Ovary (tissue), 10 donors: ENCODE measurements at regions of chr14 and their contacts with region 1.

Region 1: GRCh38 chr14:76918751-76919543 is 92.7 kb downstream of the LRRC74A start:
- DNase-seq: peak; percentile 97 to 98 (median 98)
- H3K4me3 ChIP-seq: no peak overlapping the region
- H3K27ac ChIP-seq: peak overlapping the region in 1 of 2 donors; percentile 86
- H3K4me1 ChIP-seq: peaks cover 42% of the 10 kb centered on the region
- H3K27me3 ChIP-seq: no peaks in the 10 kb centered on the region
- CTCF ChIP-seq: peak in 1 of 3 donors; percentile 32
- EP300 ChIP-seq: peak; percentile 83
- POLR2A ChIP-seq: no peak

Region 2: GRCh38 chr14:76956316-76957090 is 37.6 kb after region 1 on chr14:
- intact Hi-C with region 1: loop called in 3 of 4 experiments (anchors 2 to 5 kb)
- DNase-seq: peak; percentile 82 to 91 (median 90)
- H3K4me3 ChIP-seq: peak overlapping the region; percentile 29
- H3K27ac ChIP-seq: peak overlapping the region; percentile 88 to 95
- H3K4me1 ChIP-seq: peaks cover 9% of the 10 kb centered on the region
- H3K27me3 ChIP-seq: no peaks in the 10 kb centered on the region
- CTCF ChIP-seq: peak in 1 of 3 donors; percentile 41
- EP300 ChIP-seq: no peak
- POLR2A ChIP-seq: no peak

Region 3: GRCh38 chr14:77040059-77040740 is 121.3 kb after region 1 on chr14:
- intact Hi-C with region 1: loop called in 1 of 4 experiments (anchors 5 kb)
- DNase-seq: peak; percentile 99 to 100 (median 100)
- H3K4me3 ChIP-seq: peak overlapping the region; percentile 23
- H3K27ac ChIP-seq: peak overlapping the region; percentile 60 to 94
- H3K4me1 ChIP-seq: peaks cover 35% of the 10 kb centered on the region
- H3K27me3 ChIP-seq: no peaks in the 10 kb centered on the region
- CTCF ChIP-seq: no peak
- EP300 ChIP-seq: peak; percentile 89
- POLR2A ChIP-seq: peak; percentile 16

Region 4: DNA sequence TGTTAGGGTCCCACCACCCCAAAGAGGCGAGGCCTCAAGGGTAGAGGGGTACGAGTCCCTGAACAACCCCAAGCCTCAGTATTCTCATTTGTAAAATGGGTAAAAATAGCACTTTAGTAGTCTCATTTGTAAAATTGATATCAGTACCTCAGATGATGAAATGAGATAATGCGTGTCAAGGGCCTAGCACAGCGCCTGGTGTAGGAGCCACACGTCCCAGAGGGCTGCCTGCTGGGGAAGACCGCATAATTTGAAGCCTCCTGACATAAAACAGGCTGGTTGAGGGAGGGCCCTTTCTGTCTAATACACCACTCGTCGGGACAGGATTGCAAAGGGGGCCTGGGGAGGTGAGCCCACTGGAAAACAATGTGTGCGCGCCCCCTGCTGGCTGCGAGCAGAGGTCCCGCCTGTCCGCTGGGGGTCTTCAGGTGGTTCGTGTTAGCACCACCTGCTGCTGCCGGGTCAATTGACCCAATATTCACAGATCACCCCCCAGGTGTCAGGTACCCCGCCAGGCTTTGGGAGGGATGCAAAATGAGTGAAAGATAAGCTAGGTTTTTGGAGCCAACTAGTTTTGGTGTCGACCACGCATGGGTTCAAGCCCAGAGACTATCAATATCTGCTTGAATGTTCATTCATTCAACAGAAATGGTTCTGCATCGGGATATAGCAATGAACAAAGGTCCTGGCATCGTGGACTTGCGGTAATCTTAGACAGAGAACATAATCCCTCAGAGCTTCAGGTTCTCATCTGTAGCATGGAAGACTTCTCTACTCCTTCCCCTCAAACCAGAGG is 134.3 kb after region 1 on chr14:
- intact Hi-C with region 1: loop called in 3 of 4 experiments (anchors 2 to 5 kb)
- DNase-seq: peak; percentile 78 to 87 (median 86)
- H3K4me3 ChIP-seq: no peak overlapping the region
- H3K27ac ChIP-seq: no peak overlapping the region
- H3K4me1 ChIP-seq: no peaks in the 10 kb centered on the region
- H3K27me3 ChIP-seq: no peaks in the 10 kb centered on the region
- CTCF ChIP-seq: peak; percentile 75 to 96 (median 94)
- EP300 ChIP-seq: no peak
- POLR2A ChIP-seq: no peak

Region 5: GRCh38 chr14:77067632-77068514 is 148.9 kb after region 1 on chr14:
- intact Hi-C with region 1: loop called in 3 of 4 experiments (anchors 5 kb)
- DNase-seq: peak; percentile 61 to 80 (median 73)
- H3K4me3 ChIP-seq: no peak overlapping the region
- H3K27ac ChIP-seq: no peak overlapping the region
- H3K4me1 ChIP-seq: peaks cover 1% of the 10 kb centered on the region
- H3K27me3 ChIP-seq: no peaks in the 10 kb centered on the region
- CTCF ChIP-seq: peak; percentile 63 to 75 (median 73)
- EP300 ChIP-seq: no peak
- POLR2A ChIP-seq: no peak